ENCODE measurements at regions of chr1 and their contacts with region 1.

Region 1: GRCh38 chr1:159936273-159936904 is 9.0 kb downstream of the IGSF9 start:
- DNase-seq: peak; percentile 93
- H3K4me3 Mint-ChIP-seq: no peak overlapping the region
- H3K27ac Mint-ChIP-seq: no peak overlapping the region
- H3K4me1 Mint-ChIP-seq: peaks cover 39% of the 10 kb centered on the region
- H3K27me3 Mint-ChIP-seq: no peaks in the 10 kb centered on the region
- CTCF ChIP-seq: peak; percentile 100

Region 2: GRCh38 chr1:159960721-159961381 is 24.5 kb after region 1 on chr1:
- CTCF ChIA-PET with region 1: no interaction called
- intact Hi-C with region 1: no loop called
- DNase-seq: peak; percentile 44
- H3K4me3 Mint-ChIP-seq: peak overlapping the region; percentile 42
- H3K27ac Mint-ChIP-seq: no peak overlapping the region
- H3K4me1 Mint-ChIP-seq: peaks cover 28% of the 10 kb centered on the region
- H3K27me3 Mint-ChIP-seq: peaks cover 32% of the 10 kb centered on the region
- CTCF ChIP-seq: no peak

Region 3: GRCh38 chr1:160046494-160047110 is 110.2 kb after region 1 on chr1:
- CTCF ChIA-PET with region 1: no interaction called
- intact Hi-C with region 1: no loop called
- DNase-seq: peak; percentile 37
- H3K4me3 Mint-ChIP-seq: peak overlapping the region; percentile 9
- H3K27ac Mint-ChIP-seq: no peak overlapping the region
- H3K4me1 Mint-ChIP-seq: peaks cover 8% of the 10 kb centered on the region
- H3K27me3 Mint-ChIP-seq: peaks cover 84% of the 10 kb centered on the region
- CTCF ChIP-seq: peak; percentile 66

Region 4: DNA sequence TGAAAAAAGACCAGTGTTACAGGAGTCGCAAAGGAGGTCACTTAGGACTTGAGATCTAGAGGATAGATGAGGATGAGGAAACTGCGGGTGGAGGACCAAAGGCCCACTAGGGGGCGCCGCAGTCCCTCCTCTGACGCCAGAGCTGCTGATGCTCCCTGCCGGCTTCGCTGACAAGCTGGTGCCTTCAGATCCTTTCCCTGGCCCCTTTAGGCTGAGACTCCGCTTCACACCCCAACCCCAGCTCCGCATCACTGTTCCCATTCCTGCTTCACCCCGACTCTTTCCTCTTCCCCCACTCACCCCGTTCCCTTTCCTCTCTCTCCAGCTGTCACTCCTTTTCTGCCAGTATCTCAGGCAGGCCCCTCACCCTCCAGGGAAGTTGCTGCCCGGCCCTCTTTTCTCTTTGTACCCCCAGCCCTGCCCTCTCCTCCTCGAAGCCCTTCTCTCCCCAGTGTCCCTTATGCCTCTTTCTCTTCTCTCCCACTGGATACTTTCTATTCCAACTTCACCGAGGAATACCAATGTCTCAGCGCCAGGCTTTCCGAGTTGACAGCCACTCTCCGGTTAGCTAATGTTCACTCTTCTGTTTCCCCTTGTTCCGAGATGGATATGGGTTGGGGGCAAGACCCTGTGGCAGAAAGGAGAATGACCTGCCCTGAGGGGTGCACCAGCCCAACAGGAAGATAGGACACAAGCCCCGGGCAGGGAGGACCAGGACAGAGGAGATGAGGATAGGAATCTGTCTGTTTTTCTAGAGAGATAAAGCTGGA is 149.5 kb after region 1 on chr1:
- CTCF ChIA-PET with region 1: no interaction called
- intact Hi-C with region 1: loop called (anchors 10 kb)
- DNase-seq: peak; percentile 84
- H3K4me3 Mint-ChIP-seq: no peak overlapping the region
- H3K27ac Mint-ChIP-seq: no peak overlapping the region
- H3K4me1 Mint-ChIP-seq: peaks cover 4% of the 10 kb centered on the region
- H3K27me3 Mint-ChIP-seq: peaks cover 26% of the 10 kb centered on the region
- CTCF ChIP-seq: peak; percentile 83

Measured in Calu3 (cell line).